ENCODE measurements at regions of chr14 and their contacts with region 1.

Region 1: DNA sequence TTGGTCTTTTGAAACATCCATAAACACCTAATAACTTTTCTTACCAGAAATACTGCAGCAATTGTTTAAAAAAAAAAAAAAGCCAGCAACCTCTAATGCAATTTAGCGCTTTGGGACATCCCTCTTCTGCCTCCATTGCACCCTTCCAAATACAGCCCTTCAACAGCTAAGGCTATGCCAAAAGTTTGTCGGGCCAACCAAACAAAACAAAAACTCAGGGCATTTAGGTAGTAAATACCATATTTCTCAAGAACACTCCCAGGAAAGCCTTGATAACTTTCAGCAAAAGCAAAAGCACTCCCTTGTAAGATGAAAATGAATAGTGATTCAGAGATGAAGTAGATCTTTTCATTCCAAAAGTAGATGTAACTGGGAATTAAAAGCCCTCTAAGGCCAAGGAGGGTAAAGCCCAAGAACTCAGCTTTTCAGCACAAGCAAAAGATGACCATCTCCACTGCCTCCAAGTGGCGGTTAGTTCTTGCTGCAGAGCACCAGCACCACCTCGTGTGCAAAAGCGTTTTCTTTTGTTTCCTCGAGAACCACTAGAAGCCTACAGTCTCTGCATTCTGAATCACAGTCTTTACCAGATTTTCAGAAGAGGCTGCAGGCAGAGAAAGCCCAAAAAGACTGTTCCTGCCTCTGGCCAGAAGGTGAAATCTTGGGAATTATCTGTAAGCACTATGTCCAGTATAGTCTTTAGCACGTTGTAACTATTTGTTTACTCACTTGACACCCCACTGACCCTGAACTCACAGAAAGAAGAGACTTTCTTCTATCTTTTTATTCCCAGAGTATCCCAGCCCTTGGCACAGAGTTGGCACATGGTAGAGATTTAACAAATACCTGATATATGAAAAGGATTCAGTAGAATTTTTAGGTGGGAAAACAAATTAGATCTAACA is 53.1 kb downstream of the SIX6 start:
- DNase-seq: peak; percentile 45
- ATAC-seq: peak; percentile 94
- H3K4me3 ChIP-seq: no peak overlapping the region
- H3K27ac ChIP-seq: no peak overlapping the region
- H3K4me1 ChIP-seq: no peaks in the 10 kb centered on the region
- H3K27me3 ChIP-seq: no peaks in the 10 kb centered on the region
- CTCF ChIP-seq: peak; percentile 81
- EP300 ChIP-seq: no peak
- POLR2A ChIP-seq: no peak
- RAD21 ChIP-seq: 0 out of 2 replicates have a peak, but pooled peaks have one; percentile 41

Region 2: GRCh38 chr14:60064491-60065072 is 497.5 kb before region 1 on chr14:
- CTCF ChIA-PET with region 1: no interaction called
- POLR2A ChIA-PET with region 1: no interaction called
- in situ Hi-C with region 1: loop called (anchors 25 kb)
- intact Hi-C with region 1: no loop called
- DNase-seq: peak; percentile 9
- ATAC-seq: no peak
- H3K4me3 ChIP-seq: no peak overlapping the region
- H3K27ac ChIP-seq: no peak overlapping the region
- H3K4me1 ChIP-seq: no peaks in the 10 kb centered on the region
- H3K27me3 ChIP-seq: no peaks in the 10 kb centered on the region; a peak in 1 of 5 replicates
- CTCF ChIP-seq: peak; percentile 54
- EP300 ChIP-seq: no peak
- POLR2A ChIP-seq: no peak
- RAD21 ChIP-seq: 0 out of 2 replicates have a peak, but pooled peaks have one; percentile 10

Region 3: GRCh38 chr14:60184146-60184904 is 377.8 kb before region 1 on chr14:
- CTCF ChIA-PET with region 1: no interaction called
- POLR2A ChIA-PET with region 1: no interaction called
- in situ Hi-C with region 1: no loop called
- intact Hi-C with region 1: loop called (anchors 10 kb)
- DNase-seq: peak; percentile 55
- ATAC-seq: 0 out of 3 replicates have a peak, but pooled peaks have one; percentile 36
- H3K4me3 ChIP-seq: peak overlapping the region; percentile 33 to 71 (median 45); a peak in 5 of 6 replicates
- H3K27ac ChIP-seq: no peak overlapping the region
- H3K4me1 ChIP-seq: peaks cover 12% of the 10 kb centered on the region; the same call in 1 of the 2 replicates
- H3K27me3 ChIP-seq: no peaks in the 10 kb centered on the region
- CTCF ChIP-seq: peak; percentile 74
- EP300 ChIP-seq: no peak
- POLR2A ChIP-seq: no peak
- RAD21 ChIP-seq: peak; percentile 61; the same call in 1 of the 2 replicates

Region 4: DNA sequence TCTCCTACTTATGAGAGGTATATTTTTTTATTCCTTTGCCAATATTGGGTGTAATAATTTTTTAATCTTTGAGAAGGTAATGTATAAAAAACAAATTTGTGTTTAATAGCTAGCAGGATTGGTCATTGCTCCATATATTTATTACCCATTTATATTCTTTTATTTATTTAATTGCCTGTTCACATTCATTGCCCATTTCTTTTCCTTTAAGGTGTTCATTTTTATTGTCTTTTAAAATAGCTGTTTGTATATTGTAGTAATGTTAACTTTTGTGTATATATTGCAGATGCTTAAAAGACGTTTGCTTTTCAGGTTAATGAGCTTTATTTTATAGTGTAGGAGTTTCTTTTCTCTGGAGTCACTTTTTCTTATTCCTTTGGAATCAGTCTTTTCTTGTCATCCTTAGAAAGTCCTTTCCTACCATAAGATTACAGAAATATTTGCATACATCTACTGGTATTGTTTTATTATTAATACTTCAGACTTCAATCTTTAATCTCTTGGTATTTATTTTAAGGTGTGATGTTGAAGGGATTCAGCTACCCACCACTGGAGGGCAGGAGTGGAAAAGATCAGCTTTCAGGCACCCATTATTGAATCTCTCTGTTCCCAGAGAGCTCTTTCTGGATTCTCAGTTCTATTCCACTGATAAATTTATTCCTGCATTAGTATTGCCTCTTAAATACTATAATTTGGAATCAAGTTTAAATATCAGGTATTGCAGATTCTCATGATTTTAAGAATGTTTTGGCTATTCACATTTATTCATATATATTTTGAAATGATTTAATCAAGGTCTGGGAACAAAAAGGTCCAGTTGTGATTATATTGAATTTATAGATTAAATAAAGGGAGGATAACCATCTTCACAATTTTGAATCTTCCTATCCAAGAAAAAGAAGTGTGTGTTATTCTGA is 295.8 kb before region 1 on chr14:
- CTCF ChIA-PET with region 1: interaction called, 3 read pairs
- POLR2A ChIA-PET with region 1: no interaction called
- in situ Hi-C with region 1: no loop called
- intact Hi-C with region 1: loop called (anchors 5 kb)
- DNase-seq: peak; percentile 27
- ATAC-seq: peak; percentile 58; the same call in 2 of the 3 replicates
- H3K4me3 ChIP-seq: no peak overlapping the region
- H3K27ac ChIP-seq: no peak overlapping the region
- H3K4me1 ChIP-seq: peaks cover 9% of the 10 kb centered on the region; the same call in 1 of the 2 replicates
- H3K27me3 ChIP-seq: no peaks in the 10 kb centered on the region
- CTCF ChIP-seq: peak; percentile 57
- EP300 ChIP-seq: no peak
- POLR2A ChIP-seq: no peak
- RAD21 ChIP-seq: no peak

Region 5: DNA sequence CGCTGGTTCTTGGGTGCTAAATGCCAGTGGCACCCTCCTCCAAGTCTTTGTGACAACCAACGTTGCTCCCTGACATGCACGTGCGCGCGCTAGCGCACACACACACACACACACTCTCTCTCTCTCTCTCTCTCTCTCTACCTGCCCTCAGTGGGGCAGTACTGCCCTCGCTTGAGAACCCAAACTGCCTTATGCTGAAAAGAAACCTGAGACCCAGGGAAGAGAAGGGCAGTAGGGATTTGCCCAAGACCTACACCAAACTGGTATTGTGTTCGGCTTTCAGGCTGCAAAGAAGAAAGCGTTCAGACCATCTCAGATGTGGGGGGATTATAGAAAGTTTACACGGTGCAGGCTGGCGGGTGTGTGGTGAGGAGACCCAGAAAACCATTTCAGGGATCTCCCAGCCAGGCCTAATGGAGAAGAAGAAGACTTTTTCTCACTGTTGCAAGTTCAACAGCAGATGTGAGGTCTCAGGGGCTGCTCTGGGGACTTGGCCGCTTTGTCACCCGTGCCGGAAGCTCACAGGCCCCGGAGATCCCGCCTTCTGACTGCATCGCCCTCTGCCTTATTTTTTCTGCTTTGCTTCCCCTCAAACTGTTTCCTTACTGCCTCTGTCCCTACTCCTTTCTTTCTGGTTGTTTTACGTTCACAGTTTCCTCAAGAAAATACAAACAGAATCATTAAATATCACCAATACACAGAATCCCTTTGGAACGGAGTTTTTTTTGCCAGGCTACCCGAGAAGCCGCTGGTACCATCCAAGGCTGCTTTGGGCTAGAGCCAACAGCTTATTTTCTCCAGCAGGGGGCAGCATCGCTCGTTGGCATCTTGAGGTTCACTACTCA is 230.7 kb before region 1 on chr14:
- CTCF ChIA-PET with region 1: interaction called, 6 read pairs
- POLR2A ChIA-PET with region 1: no interaction called
- in situ Hi-C with region 1: no loop called
- intact Hi-C with region 1: loop called (anchors 5 kb)
- DNase-seq: peak; percentile 54
- ATAC-seq: peak; percentile 94
- H3K4me3 ChIP-seq: peak overlapping the region; percentile 52 to 72 (median 62)
- H3K27ac ChIP-seq: no peak overlapping the region
- H3K4me1 ChIP-seq: 0 out of 2 replicates have a peak, but pooled peaks cover 8% of the 10 kb centered on the region
- H3K27me3 ChIP-seq: no peaks in the 10 kb centered on the region; a peak in 1 of 5 replicates
- CTCF ChIP-seq: peak; percentile 84
- EP300 ChIP-seq: no peak
- POLR2A ChIP-seq: no peak
- RAD21 ChIP-seq: peak; percentile 40; the same call in 1 of the 2 replicates

Region 6: DNA sequence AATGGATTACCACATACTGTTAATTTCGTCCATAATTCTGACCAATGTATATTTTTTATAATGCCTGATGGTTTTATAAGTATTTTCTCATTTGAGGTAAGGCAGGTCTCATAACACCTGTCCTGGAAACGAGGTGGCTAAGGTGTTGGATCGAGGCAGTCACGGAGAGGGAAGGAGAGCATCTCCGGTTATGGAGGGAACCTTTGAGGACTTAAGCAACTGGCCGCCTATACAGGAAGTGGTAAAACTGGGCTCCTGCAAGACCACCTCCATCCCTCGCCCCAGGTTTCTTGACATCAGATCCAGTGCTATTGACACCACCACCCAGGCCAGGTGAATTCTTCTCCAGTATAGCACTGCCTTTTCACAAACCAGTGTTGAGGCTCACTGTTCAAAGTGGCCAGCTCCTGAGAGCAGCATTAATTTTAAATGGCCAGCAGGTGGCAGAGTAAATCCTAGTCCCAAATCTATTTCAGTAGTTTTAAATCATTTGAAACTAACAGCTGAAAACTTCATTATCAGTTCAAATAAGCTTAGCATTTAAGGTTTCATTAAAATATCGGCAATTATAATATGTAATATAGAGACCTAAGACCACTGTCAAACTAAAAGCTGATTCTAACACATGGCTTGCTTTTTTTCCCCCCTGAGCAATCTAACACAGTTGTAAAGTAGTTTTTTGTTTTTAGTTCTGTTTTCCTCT is 212.3 kb before region 1 on chr14:
- CTCF ChIA-PET with region 1: interaction called, 10 read pairs
- POLR2A ChIA-PET with region 1: no interaction called
- in situ Hi-C with region 1: loop called (anchors 5 kb)
- intact Hi-C with region 1: loop called (anchors 1 kb)
- DNase-seq: peak; percentile 21
- ATAC-seq: peak; percentile 83
- H3K4me3 ChIP-seq: no peak overlapping the region
- H3K27ac ChIP-seq: no peak overlapping the region
- H3K4me1 ChIP-seq: no peaks in the 10 kb centered on the region
- H3K27me3 ChIP-seq: no peaks in the 10 kb centered on the region
- CTCF ChIP-seq: peak; percentile 67
- EP300 ChIP-seq: no peak
- POLR2A ChIP-seq: no peak
- RAD21 ChIP-seq: no peak

Region 7: DNA sequence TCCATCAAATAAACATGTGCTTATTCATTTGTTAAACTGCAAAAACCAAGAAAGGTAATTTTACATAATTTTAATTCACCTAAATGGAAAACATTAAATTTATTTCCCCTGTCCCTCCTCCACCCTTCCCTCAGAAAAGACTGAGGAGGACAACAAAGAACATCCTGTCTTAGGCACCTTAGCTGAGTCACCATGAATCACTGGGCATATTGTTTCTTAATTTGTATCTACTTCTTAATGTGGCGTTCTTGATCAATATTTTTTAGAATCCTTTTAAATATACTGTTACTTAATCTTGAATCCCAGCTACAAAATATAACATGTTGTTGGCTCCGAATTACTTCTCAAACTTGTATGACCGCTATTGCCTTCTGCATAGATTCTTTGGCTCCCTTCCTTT is 29.7 kb before region 1 on chr14:
- CTCF ChIA-PET with region 1: no interaction called
- POLR2A ChIA-PET with region 1: no interaction called
- in situ Hi-C with region 1: no loop called
- intact Hi-C with region 1: no loop called
- DNase-seq: no peak
- ATAC-seq: no peak
- H3K4me3 ChIP-seq: no peak overlapping the region
- H3K27ac ChIP-seq: no peak overlapping the region
- H3K4me1 ChIP-seq: no peaks in the 10 kb centered on the region
- H3K27me3 ChIP-seq: no peaks in the 10 kb centered on the region; a peak in 3 of 5 replicates
- CTCF ChIP-seq: no peak
- EP300 ChIP-seq: no peak
- POLR2A ChIP-seq: no peak
- RAD21 ChIP-seq: no peak